HAP-1 (cell line): ENCODE measurements at regions of chr12 and their contacts with region 1.

Region 1: GRCh38 chr12:94795520-94795919 is 145.2 kb upstream of the TMCC3 start:
- DNase-seq: peak in 1 of 2 experiments; percentile 40
- H3K4me3 ChIP-seq: no peak overlapping the region
- H3K4me1 ChIP-seq: peaks cover 38% of the 10 kb centered on the region
- H3K27me3 ChIP-seq: no peaks in the 10 kb centered on the region

Region 2: GRCh38 chr12:94704452-94705306 is 90.8 kb before region 1 on chr12:
- in situ Hi-C with region 1: no loop called
- DNase-seq: peak; percentile 30 to 48
- H3K4me3 ChIP-seq: no peak overlapping the region
- H3K4me1 ChIP-seq: peaks cover 38% of the 10 kb centered on the region
- H3K27me3 ChIP-seq: no peaks in the 10 kb centered on the region

Region 3: GRCh38 chr12:94954029-94954685 is 158.6 kb after region 1 on chr12:
- in situ Hi-C with region 1: loop called (anchors 25 kb)
- DNase-seq: peak; percentile 78 to 99
- H3K4me3 ChIP-seq: no peak overlapping the region
- H3K4me1 ChIP-seq: peaks cover 39% of the 10 kb centered on the region
- H3K27me3 ChIP-seq: no peaks in the 10 kb centered on the region